ENCODE measurements at regions of chr12 and their contacts with region 1.

Region 1: GRCh38 chr12:56763753-56764657 is 881 bp downstream of the HSD17B6 start:
- DNase-seq: peak; percentile 36
- H3K4me3 ChIP-seq: no peak overlapping the region
- H3K27ac ChIP-seq: no peak overlapping the region
- H3K27me3 ChIP-seq: no peaks in the 10 kb centered on the region
- CTCF ChIP-seq: no peak

Region 2: GRCh38 chr12:56751712-56752598 is 12.1 kb before region 1 on chr12 and contains the start of gene PRIM1:
- CTCF ChIA-PET with region 1: interaction called, 10 read pairs
- POLR2A ChIA-PET with region 1: interaction called, 6 read pairs
- DNase-seq: peak; percentile 10
- H3K4me3 ChIP-seq: peak within 1 kb of the TSS; percentile 87
- H3K27ac ChIP-seq: peak within 1 kb of the TSS; percentile 39
- H3K27me3 ChIP-seq: no peaks in the 10 kb centered on the region
- CTCF ChIP-seq: peak; percentile 23; the same call in 1 of the 2 replicates
- polyA plus RNA-seq, gene PRIM1: 6.2 and 6.7 TPM in 2 replicates

Region 3: DNA sequence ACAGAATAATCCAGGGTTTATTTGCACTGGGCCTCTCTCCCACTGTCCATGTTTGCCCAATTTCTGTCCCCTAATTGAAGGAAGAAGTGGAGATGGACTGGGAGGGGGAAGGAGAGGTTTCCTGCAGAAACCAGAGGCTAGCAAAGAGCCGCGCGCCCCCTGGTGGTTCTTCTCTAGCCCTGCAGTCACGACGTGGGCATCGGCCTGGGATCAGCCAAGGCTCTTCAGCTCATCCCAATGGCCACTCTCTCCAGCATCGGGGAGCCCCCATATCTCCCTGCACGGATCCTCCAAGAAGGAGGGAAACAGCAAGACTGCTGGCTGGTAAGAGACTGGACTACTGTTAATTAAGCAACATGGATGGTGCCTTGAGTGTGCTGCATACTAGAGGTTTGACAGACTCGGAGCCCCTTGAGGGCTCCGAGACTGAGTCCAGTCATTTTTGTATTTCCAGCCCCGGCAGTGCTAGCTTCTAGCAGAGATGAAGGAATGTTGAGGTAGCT is 223.6 kb after region 1 on chr12:
- CTCF ChIA-PET with region 1: interaction called, 66 read pairs
- POLR2A ChIA-PET with region 1: no interaction called
- DNase-seq: peak; percentile 38
- H3K4me3 ChIP-seq: no peak overlapping the region
- H3K27ac ChIP-seq: no peak overlapping the region
- H3K27me3 ChIP-seq: peaks cover 5% of the 10 kb centered on the region
- CTCF ChIP-seq: peak; percentile 97

Region 4: GRCh38 chr12:57063991-57064685 is 300.1 kb after region 1 on chr12:
- CTCF ChIA-PET with region 1: interaction called, 36 read pairs
- POLR2A ChIA-PET with region 1: no interaction called
- DNase-seq: no peak
- H3K4me3 ChIP-seq: no peak overlapping the region
- H3K27ac ChIP-seq: no peak overlapping the region
- H3K27me3 ChIP-seq: no peaks in the 10 kb centered on the region
- CTCF ChIP-seq: no peak